GM12878 (cell line): ENCODE measurements at regions of chr7 and their contacts with region 1.

Region 1: GRCh38 chr7:35906191-35906908 is 105.5 kb downstream of the SEPTIN7 start:
- DNase-seq: peak; percentile 68
- ATAC-seq: peak; percentile 97
- H3K4me3 ChIP-seq: no peak overlapping the region
- H3K27ac ChIP-seq: no peak overlapping the region
- H3K4me1 ChIP-seq: no peaks in the 10 kb centered on the region
- H3K27me3 ChIP-seq: no peaks in the 10 kb centered on the region
- CTCF ChIP-seq: peak; percentile 79 to 82 (median 80)
- EP300 ChIP-seq: no peak
- POLR2A ChIP-seq: 0 out of 2 replicates have a peak, but pooled peaks have one; percentile 35
- RAD21 ChIP-seq: peak; percentile 91

Region 2: DNA sequence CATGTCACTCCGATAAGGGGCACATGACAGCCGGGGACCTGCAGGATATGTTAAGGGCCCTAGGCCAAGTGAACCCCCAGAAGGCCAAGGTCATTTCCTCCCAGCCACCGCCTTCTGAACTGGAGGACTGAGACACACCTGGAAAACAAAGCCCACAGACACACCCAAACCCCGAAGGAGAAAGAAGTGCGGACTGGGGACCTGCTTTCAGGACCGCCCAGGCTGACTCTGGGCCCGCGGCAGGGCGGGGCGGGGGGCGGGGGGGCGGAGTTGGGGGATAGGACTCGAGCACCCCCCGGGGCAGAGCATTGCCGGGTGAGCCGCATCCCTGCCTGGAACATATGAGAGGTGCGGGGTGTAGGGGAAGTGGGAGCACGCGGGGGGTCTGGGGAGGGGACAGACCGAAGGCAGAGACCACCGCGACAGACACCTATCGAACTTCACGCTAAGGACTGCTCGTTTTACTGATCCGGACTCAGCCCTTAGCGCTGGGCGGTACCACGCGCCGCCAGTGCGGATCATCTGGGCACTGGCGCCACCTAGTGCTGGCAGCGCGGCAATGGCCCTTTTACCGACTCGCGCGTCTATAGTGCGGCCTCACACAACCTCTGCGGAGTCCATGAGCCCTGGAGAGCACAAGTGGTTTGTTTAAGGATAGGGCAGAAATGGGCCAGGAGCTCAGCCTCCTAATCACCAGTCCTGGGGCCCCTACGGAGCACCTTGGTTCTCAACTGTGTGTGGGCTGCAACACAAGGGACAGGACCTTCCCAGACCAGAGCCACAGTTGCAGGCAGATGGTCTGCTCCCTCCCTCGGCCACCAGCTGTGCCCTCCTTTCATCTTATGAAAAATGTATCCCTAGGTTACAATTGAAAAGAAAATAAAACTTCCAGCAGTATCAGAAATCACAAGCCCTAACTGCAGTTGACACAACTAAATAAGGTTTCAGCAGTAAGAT is 369.0 kb before region 1 on chr7:
- CTCF ChIA-PET with region 1: no interaction called
- POLR2A ChIA-PET with region 1: no interaction called
- RAD21 ChIA-PET with region 1: no interaction called
- SMC1A ChIA-PET with region 1: no interaction called
- in situ Hi-C with region 1: no loop called
- intact Hi-C with region 1: loop called (anchors 5 kb)
- DNase-seq: no peak
- ATAC-seq: peak; percentile 100
- H3K4me3 ChIP-seq: no peak overlapping the region
- H3K27ac ChIP-seq: no peak overlapping the region
- H3K4me1 ChIP-seq: no peaks in the 10 kb centered on the region
- H3K27me3 ChIP-seq: no peaks in the 10 kb centered on the region
- CTCF ChIP-seq: peak; percentile 94 to 96 (median 95)
- EP300 ChIP-seq: no peak
- POLR2A ChIP-seq: no peak
- RAD21 ChIP-seq: peak; percentile 76

Region 3: GRCh38 chr7:35701287-35701900 is 205.0 kb before region 1 on chr7:
- CTCF ChIA-PET with region 1: interaction called, 115 read pairs
- POLR2A ChIA-PET with region 1: no interaction called
- RAD21 ChIA-PET with region 1: interaction called, 14 read pairs
- SMC1A ChIA-PET with region 1: interaction called, 155 read pairs
- in situ Hi-C with region 1: no loop called
- intact Hi-C with region 1: no loop called
- DNase-seq: no peak
- ATAC-seq: peak; percentile 92
- H3K4me3 ChIP-seq: no peak overlapping the region
- H3K27ac ChIP-seq: no peak overlapping the region
- H3K4me1 ChIP-seq: no peaks in the 10 kb centered on the region
- H3K27me3 ChIP-seq: no peaks in the 10 kb centered on the region
- CTCF ChIP-seq: no peak
- EP300 ChIP-seq: no peak
- POLR2A ChIP-seq: no peak
- RAD21 ChIP-seq: no peak

Region 4: DNA sequence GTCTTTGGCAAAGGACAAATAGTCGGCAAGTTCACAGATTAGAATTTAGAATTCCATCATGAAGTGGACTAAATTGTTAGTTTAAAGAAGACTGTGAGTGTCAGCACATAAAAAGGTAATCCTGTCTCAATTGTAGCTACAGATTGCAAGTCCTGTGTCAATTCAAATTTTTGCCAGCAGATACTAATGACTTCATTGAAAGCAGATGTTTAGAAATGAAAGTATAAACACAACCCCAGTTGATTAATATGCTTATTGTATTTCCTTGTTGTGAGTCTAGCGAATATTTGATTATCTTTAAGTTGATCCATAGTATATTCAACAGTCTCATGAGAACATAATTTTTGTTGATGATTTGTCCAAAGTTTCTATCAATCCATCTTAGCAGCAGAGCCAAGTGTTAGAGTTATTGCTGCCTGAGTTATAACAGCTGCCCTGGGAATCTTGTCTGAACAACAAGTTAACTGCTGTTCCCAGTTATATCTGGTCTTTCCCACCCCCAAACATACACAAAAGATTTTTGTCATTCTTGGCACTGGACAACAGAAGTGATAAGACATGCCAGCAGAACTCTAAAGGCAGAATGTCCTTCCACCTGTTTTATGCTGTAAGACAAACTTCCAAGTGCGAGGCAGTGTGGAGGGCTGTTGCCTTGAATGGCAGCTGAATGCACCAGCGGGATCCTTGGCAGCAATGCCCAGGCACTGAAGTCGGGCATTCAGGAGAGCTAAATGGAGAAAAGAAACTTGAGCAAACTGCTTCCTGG is 190.1 kb before region 1 on chr7:
- CTCF ChIA-PET with region 1: interaction called, 30 read pairs
- POLR2A ChIA-PET with region 1: no interaction called
- RAD21 ChIA-PET with region 1: interaction called, 26 read pairs
- SMC1A ChIA-PET with region 1: interaction called, 155 read pairs
- in situ Hi-C with region 1: loop called (anchors 5 kb)
- intact Hi-C with region 1: no loop called
- DNase-seq: no peak
- ATAC-seq: no peak
- H3K4me3 ChIP-seq: no peak overlapping the region
- H3K27ac ChIP-seq: no peak overlapping the region
- H3K4me1 ChIP-seq: peaks cover 7% of the 10 kb centered on the region
- H3K27me3 ChIP-seq: no peaks in the 10 kb centered on the region
- CTCF ChIP-seq: no peak
- EP300 ChIP-seq: no peak
- POLR2A ChIP-seq: no peak
- RAD21 ChIP-seq: no peak

Region 5: GRCh38 chr7:35818513-35818912 is 87.8 kb before region 1 on chr7:
- CTCF ChIA-PET with region 1: no interaction called
- POLR2A ChIA-PET with region 1: no interaction called
- RAD21 ChIA-PET with region 1: no interaction called
- SMC1A ChIA-PET with region 1: no interaction called
- in situ Hi-C with region 1: no loop called
- intact Hi-C with region 1: no loop called
- DNase-seq: no peak
- ATAC-seq: no peak
- H3K4me3 ChIP-seq: no peak overlapping the region
- H3K27ac ChIP-seq: no peak overlapping the region
- H3K4me1 ChIP-seq: peaks cover 6% of the 10 kb centered on the region
- H3K27me3 ChIP-seq: no peaks in the 10 kb centered on the region
- CTCF ChIP-seq: no peak
- EP300 ChIP-seq: no peak
- POLR2A ChIP-seq: no peak
- RAD21 ChIP-seq: no peak